ENCODE measurements at regions of chr19 and their contacts with region 1.

Region 1: GRCh38 chr19:34712395-34713261 is 21.4 kb upstream of the ZNF181 start:
- DNase-seq: peak; percentile 40
- ATAC-seq: peak; percentile 47
- H3K4me3 Mint-ChIP-seq: peak overlapping the region; percentile 46
- H3K27ac Mint-ChIP-seq: peak overlapping the region; percentile 39; the same call in 1 of the 2 replicates
- H3K4me1 Mint-ChIP-seq: peaks cover 14% of the 10 kb centered on the region
- H3K27me3 Mint-ChIP-seq: peaks cover 55% of the 10 kb centered on the region
- CTCF ChIP-seq: peak; percentile 85

Region 2: DNA sequence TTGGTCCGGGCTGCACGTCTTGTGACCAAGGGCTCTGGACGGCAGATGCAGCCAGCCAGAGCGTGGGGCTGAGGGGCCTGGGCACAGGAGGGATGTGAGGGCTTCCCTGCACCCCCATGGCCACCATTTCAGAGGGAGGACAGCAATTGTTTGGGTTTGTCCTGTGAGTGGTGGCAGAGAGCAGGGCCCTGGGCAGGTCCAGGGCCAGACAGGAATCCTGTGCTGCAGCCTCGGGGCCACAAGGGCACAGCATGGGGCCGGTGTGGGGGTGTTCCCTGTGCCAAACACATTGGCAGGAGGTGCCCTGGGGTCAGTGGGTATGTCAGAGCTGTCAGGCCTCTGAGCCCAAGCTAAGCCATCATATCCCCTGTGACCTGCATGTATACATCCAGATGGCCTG is 198.9 kb before region 1 on chr19:
- CTCF ChIA-PET with region 1: no interaction called
- POLR2A ChIA-PET with region 1: no interaction called
- DNase-seq: no peak
- ATAC-seq: no peak
- H3K4me3 Mint-ChIP-seq: no peak overlapping the region
- H3K27ac Mint-ChIP-seq: no peak overlapping the region
- H3K4me1 Mint-ChIP-seq: 0 out of 2 replicates have a peak, but pooled peaks cover 3% of the 10 kb centered on the region
- H3K27me3 Mint-ChIP-seq: peaks cover 5% of the 10 kb centered on the region
- CTCF ChIP-seq: no peak

Region 3: GRCh38 chr19:34639491-34640085 is 73.0 kb before region 1 on chr19:
- CTCF ChIA-PET with region 1: interaction called, 26 read pairs
- POLR2A ChIA-PET with region 1: no interaction called
- DNase-seq: peak; percentile 62
- ATAC-seq: peak; percentile 83
- H3K4me3 Mint-ChIP-seq: no peak overlapping the region
- H3K27ac Mint-ChIP-seq: no peak overlapping the region
- H3K4me1 Mint-ChIP-seq: no peaks in the 10 kb centered on the region
- H3K27me3 Mint-ChIP-seq: peaks cover 9% of the 10 kb centered on the region
- CTCF ChIP-seq: peak; percentile 86

Measured in WTC11 (cell line).